ENCODE measurements at regions of chr4 and their contacts with region 1.

Region 1: DNA sequence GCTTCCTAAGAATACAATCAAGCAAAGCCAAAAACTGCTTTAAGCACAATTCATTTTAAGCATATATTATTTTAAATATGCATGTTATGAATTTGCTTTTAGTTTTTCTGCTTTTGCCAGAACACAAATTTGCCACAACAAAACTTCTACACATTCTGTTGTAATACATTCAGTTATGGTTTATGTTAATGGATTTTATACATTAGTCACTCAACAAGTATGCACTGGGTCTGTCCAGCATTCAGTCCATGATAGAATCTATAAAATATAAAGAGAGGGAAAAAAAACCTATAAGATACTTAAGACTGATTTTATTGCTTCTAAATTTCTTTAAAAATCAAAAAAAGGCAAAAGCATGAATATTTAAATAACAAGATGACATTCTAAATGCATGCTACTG is 22.2 kb downstream of the IQCM start:
- DNase-seq: no peak
- H3K4me3 ChIP-seq: no peak overlapping the region
- H3K27ac ChIP-seq: no peak overlapping the region
- H3K4me1 ChIP-seq: no peaks in the 10 kb centered on the region
- H3K27me3 ChIP-seq: no peaks in the 10 kb centered on the region
- CTCF ChIP-seq: no peak

Region 2: GRCh38 chr4:149017002-149017734 is 776.3 kb before region 1 on chr4:
- CTCF ChIA-PET with region 1: interaction called, 10 read pairs
- POLR2A ChIA-PET with region 1: no interaction called
- intact Hi-C with region 1: no loop called
- DNase-seq: no peak
- H3K4me3 ChIP-seq: no peak overlapping the region
- H3K27ac ChIP-seq: no peak overlapping the region
- H3K4me1 ChIP-seq: no peaks in the 10 kb centered on the region
- H3K27me3 ChIP-seq: no peaks in the 10 kb centered on the region
- CTCF ChIP-seq: no peak

Region 3: GRCh38 chr4:149708513-149709175 is 84.8 kb before region 1 on chr4:
- CTCF ChIA-PET with region 1: no interaction called
- POLR2A ChIA-PET with region 1: no interaction called
- intact Hi-C with region 1: no loop called
- DNase-seq: no peak
- H3K4me3 ChIP-seq: no peak overlapping the region
- H3K27ac ChIP-seq: no peak overlapping the region
- H3K4me1 ChIP-seq: no peaks in the 10 kb centered on the region
- H3K27me3 ChIP-seq: no peaks in the 10 kb centered on the region
- CTCF ChIP-seq: no peak

Region 4: DNA sequence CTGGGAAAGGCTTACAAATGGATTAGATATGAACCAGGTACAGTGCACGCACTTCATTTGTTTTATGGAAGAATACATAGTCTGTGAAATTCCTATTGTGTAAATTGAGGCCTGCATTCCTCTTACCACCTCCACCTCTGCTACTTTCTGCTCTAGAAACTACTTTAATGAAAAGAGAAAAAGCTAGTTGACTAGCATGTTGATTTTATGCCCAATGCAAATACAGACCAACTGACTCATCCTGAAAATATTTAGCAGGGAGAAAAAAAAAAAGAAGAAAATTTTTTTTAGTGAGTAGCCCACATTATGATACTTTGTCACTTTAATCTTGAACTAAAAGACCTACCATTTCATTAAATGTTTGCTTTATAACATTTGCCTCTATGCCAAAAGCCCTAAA is 326.0 kb after region 1 on chr4:
- CTCF ChIA-PET with region 1: no interaction called
- POLR2A ChIA-PET with region 1: no interaction called
- intact Hi-C with region 1: no loop called
- DNase-seq: peak in 1 of 2 experiments; percentile 71
- H3K4me3 ChIP-seq: no peak overlapping the region
- H3K27ac ChIP-seq: peak overlapping the region; percentile 46
- H3K4me1 ChIP-seq: peaks cover 18% of the 10 kb centered on the region
- H3K27me3 ChIP-seq: no peaks in the 10 kb centered on the region
- CTCF ChIP-seq: no peak

Measured in PC-9 (cell line).